PC-9 (cell line): ENCODE measurements at regions of chr6 and their contacts with region 1.

Region 1: DNA sequence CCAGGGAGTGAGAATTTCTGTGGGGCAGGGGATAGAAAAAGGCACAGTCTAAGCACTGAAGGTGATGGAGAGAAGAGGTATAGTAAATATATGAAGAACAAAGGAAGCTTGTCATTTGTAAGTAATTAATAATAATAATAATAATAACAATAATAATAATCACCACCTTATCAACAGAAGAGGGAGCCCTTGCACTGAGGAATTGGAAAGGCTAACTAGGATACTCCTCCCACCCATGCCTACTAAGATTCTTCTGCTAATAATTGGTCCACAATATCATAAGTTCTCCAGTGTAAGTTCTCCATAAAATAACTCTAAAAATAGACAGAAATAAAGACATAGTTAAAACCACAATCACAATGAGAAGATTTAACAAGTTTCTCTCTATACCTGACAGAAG is 912 bp upstream of the OR12D3 start:
- DNase-seq: no peak
- H3K4me3 ChIP-seq: no peak overlapping the region
- H3K27ac ChIP-seq: no peak overlapping the region
- H3K4me1 ChIP-seq: no peaks in the 10 kb centered on the region
- H3K27me3 ChIP-seq: no peaks in the 10 kb centered on the region
- CTCF ChIP-seq: no peak

Region 2: DNA sequence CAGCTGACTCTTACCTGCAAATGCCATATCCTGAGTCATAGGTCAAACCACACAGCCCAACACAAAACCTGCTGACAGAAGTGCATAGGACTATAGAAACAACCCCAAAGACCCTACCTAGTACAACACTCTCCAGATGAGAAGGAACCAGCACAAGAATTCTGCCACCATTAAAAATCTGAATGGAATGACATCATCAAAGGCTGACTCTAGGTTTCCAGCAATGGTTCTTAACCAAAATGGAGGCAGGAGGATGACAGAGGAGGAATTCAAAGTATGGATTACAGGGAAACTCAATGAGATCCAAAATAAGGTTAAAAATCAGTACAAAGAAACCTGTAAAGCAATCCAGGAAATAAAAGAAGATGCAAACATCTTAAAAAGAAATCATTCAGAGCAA is 43.3 kb before region 1 on chr6:
- CTCF ChIA-PET with region 1: no interaction called
- POLR2A ChIA-PET with region 1: no interaction called
- intact Hi-C with region 1: loop called (anchors 1 kb)
- DNase-seq: no peak
- H3K4me3 ChIP-seq: no peak overlapping the region
- H3K27ac ChIP-seq: no peak overlapping the region
- H3K4me1 ChIP-seq: no peaks in the 10 kb centered on the region
- H3K27me3 ChIP-seq: no peaks in the 10 kb centered on the region
- CTCF ChIP-seq: no peak